ENCODE measurements at regions of chr4 and their contacts with region 1.

Region 1: DNA sequence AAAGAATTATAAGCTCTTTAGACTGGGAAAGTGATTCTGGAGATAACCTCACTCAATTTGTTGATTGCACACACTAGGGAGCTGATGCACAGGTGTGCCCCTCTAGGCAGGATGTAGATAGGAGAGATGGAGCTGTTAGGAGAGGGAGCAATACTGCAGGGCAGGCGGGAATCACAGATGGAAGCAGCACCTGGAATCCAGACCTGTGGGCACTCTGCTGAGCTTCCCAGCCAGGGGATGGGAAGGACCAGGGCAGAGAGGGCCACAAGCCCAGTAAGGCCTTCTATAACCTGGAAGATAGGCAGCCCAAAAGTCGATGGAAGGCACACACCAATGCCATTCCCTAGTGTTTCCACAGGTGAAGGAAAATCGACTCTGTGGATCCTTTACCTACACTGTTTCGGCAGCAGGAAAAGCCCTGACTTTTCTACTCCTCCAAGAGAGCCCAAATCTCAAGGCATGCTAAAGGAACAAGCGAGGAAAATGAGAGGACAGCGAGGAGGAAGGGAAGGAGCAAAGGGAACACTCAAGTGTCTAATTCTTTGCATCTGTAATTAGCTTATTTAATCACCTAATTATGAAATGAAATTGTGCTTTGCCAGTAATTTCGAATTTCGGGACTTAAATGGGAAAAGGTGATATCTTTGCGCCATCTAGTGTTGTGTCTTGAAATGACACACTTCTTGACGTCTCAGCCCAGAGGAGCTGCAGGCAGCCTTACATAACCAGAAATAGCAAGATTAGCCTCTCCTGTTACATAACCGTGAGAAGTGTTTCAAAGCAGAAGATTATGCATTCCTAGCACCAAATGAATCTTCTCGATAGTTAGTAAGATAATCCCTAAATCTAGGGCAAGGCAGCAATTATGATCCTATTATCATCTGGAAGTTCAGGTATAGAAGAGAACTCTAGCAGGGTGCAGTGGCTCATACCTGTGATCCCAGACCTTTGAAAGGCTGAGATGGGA is 31.0 kb upstream of the TLR3 start:
- DNase-seq: peak; percentile 53

Region 2: GRCh38 chr4:185597532-185598188 is 440.3 kb before region 1 on chr4:
- CTCF ChIA-PET with region 1: interaction called, 10 read pairs
- POLR2A ChIA-PET with region 1: no interaction called
- DNase-seq: peak; percentile 60

Region 3: DNA sequence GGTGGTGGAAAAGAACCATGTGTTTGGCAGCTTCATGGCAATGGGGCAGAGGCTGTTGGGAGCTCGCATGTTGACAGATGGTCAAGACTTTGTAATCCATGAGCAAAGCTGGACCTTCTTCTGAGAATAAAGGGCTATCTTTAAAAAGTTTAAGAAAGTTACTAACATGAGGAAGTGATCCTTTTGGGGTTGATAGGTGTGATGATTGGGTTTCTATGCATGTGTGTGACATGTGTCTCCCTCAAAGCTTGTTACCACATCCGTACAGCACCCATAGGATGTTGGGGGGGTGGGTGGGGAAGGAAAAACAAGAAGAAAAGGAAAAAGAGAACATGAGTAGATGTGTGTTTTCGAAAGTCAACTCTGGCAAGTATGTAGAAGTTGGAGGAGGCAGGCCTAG is 92.1 kb before region 1 on chr4:
- CTCF ChIA-PET with region 1: no interaction called
- POLR2A ChIA-PET with region 1: no interaction called
- DNase-seq: no peak

Region 4: GRCh38 chr4:186021461-186022167 is 16.4 kb before region 1 on chr4:
- CTCF ChIA-PET with region 1: interaction called, 18 read pairs
- POLR2A ChIA-PET with region 1: no interaction called
- DNase-seq: peak; percentile 55

Region 5: DNA sequence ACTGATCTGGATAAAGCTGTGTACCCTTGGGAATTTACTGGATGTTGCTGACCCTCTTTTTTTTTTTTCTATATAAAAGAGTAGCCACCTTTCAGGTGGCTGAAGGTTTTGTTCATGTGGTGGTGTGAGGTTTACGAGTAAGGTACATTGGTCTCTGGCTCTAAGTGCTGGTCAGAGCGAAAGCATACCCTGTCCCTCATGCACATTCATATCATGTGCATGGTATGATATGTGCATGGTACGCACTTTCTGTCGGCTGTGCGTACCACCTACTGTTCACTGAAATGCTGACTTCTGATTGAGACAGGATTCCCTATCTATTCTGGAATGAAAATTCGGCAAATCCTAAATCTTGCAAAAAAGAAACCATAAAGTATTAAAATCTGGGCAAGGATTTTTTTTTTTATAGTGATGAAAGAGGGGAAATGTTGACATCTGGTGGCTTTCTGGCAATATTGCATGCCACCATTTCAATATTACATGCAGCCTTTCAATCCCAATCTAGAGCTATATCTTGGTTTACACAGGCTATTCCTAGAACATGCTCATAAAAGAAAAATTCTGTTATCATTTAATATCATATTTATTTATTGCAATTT is 99.3 kb after region 1 on chr4:
- CTCF ChIA-PET with region 1: interaction called, 15 read pairs
- POLR2A ChIA-PET with region 1: no interaction called
- DNase-seq: peak; percentile 14

Region 6: GRCh38 chr4:186201535-186202230 is 163.7 kb after region 1 on chr4:
- CTCF ChIA-PET with region 1: interaction called, 12 read pairs
- POLR2A ChIA-PET with region 1: no interaction called
- DNase-seq: peak; percentile 56

Region 7: GRCh38 chr4:186570193-186570996 is 532.4 kb after region 1 on chr4:
- CTCF ChIA-PET with region 1: no interaction called
- POLR2A ChIA-PET with region 1: no interaction called
- DNase-seq: no peak